Naive thymus-derived CD4-positive, alpha-beta T cell (primary cell): ENCODE measurements at regions of chrX and their contacts with region 1.

Region 1: DNA sequence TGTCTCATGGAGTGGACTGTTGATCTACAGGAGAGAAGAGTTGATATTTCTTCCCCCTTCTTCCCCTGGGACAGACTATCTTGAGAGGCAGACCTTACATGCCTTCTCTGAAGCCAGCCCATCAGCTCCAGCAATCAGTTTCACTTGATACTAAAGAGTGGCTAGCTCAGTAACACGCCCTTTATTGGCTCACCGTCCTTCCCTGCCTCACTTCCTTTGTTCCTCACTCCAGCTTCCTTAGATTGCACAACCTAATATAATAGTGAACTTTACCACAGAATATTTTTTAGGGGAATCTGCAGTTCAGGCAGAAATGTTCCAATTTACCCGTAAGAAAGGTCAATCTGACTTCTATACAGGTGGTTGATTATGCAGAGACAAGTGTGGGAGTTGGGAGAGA is 128.1 kb upstream of the NDP start:
- DNase-seq: no peak
- ATAC-seq: no peak
- H3K4me3 ChIP-seq: no peak overlapping the region
- H3K4me3 Mint-ChIP-seq: no peak overlapping the region
- H3K27ac ChIP-seq: no peak overlapping the region
- H3K27ac Mint-ChIP-seq: no peak overlapping the region
- H3K4me1 ChIP-seq: no peaks in the 10 kb centered on the region
- H3K4me1 Mint-ChIP-seq: no peaks in the 10 kb centered on the region
- H3K27me3 ChIP-seq: no peaks in the 10 kb centered on the region
- H3K27me3 Mint-ChIP-seq: no peaks in the 10 kb centered on the region

Region 2: DNA sequence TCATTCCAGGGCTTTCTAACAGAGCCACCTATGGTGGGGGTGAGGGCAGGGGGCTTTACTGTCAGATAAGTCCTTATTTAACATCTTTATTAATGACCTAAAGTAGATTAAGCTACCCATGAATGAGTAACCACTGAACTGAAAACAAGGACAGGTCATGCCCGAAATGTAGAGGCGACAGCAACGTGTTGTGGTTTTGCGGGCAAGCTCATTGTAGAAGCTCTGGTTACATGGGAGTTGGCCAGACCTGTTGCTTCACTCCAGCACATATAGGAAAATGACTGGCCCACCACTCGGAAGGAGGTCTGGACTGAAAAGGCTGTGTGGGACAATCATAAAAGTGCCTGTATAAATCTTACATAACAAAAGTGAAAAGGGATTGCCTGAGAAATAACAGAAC is 18.5 kb before region 1 on chrX:
- CTCF ChIA-PET with region 1: no interaction called
- POLR2A ChIA-PET with region 1: no interaction called
- intact Hi-C with region 1: no loop called
- DNase-seq: no peak
- ATAC-seq: no peak
- H3K4me3 ChIP-seq: no peak overlapping the region
- H3K4me3 Mint-ChIP-seq: no peak overlapping the region
- H3K27ac ChIP-seq: no peak overlapping the region
- H3K27ac Mint-ChIP-seq: no peak overlapping the region
- H3K4me1 ChIP-seq: no peaks in the 10 kb centered on the region
- H3K4me1 Mint-ChIP-seq: peaks cover 0 to 3% (median 0%) of the 10 kb centered on the region in 7 donors
- H3K27me3 ChIP-seq: no peaks in the 10 kb centered on the region
- H3K27me3 Mint-ChIP-seq: no peaks in the 10 kb centered on the region

Region 3: DNA sequence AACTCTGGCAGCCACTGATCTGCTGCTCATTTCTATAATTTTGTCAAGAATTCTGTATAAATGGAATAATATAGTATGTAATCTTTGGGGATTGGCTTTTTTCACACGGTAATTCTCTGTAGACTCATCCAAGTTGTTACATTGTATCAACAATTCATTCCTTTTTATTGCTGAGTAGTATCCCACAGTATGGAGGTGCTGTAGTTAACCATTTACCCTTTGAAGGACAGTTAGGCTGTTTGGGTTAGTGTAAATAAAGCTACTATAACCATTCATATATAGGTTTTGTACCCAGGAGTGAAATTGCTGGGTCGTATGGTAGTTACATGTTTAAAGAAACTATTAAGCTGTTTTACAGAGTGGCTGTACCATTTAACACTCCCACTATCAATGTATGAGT is 28.9 kb after region 1 on chrX:
- CTCF ChIA-PET with region 1: no interaction called
- POLR2A ChIA-PET with region 1: no interaction called
- intact Hi-C with region 1: loop called in 1 of 2 experiments (anchors 2 kb)
- DNase-seq: no peak
- ATAC-seq: no peak
- H3K4me3 ChIP-seq: no peak overlapping the region
- H3K4me3 Mint-ChIP-seq: no peak overlapping the region
- H3K27ac ChIP-seq: no peak overlapping the region
- H3K27ac Mint-ChIP-seq: no peak overlapping the region
- H3K4me1 ChIP-seq: no peaks in the 10 kb centered on the region
- H3K4me1 Mint-ChIP-seq: no peaks in the 10 kb centered on the region
- H3K27me3 ChIP-seq: peaks cover 0 to 3% of the 10 kb centered on the region in 2 donors
- H3K27me3 Mint-ChIP-seq: peaks cover 0 to 7% (median 0%) of the 10 kb centered on the region in 5 donors